GM13977 (cell line): ENCODE measurements at regions of chr11 and their contacts with region 1.

Region 1: GRCh38 chr11:36746886-36747710 is 149.1 kb upstream of the RAG2 start:
- DNase-seq: peak; percentile 65
- CTCF ChIP-seq: peak; percentile 99

Region 2: GRCh38 chr11:36564376-36565030 is 182.6 kb before region 1 on chr11:
- in situ Hi-C with region 1: loop called (anchors 10 kb)
- DNase-seq: peak; percentile 60
- CTCF ChIP-seq: peak; percentile 56

Region 3: GRCh38 chr11:36702330-36703055 is 44.6 kb before region 1 on chr11:
- in situ Hi-C with region 1: loop called (anchors 5 kb)
- DNase-seq: peak; percentile 61
- CTCF ChIP-seq: peak; percentile 74